Activated CD8-positive, alpha-beta memory T cell treated with anti-CD3 and anti-CD28 coated beads, Interleukin-2, amount 10 ng/mL, durations not matched to agents 7 days and 5 days (primary cell): ENCODE measurements at regions of chr11 and their contacts with region 1.

Region 1: DNA sequence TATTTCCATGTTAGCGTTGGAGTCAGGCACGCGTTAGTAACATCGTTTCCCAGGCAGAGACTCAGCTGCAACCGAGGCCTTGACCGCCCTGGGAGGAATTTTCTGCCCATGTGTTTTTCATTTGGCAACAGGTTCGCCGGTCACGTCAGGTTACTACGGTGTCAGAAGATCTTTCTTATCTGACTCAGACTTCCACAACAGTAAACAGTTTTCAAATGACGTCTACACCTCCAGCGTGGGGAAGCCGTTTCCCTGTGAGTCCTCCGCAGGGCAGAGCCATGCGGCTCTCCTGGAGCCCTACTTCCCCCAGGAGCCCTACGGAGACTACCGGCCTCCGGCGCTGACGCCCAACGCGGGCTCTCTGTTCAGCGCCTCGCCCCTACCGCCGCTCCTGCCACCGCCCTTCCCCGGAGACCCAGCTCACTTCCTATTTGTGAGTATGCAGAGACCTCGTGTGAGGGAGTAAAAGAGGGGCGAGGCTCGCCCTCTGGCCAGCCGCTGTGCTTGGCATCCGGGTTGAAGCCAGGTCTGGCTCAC is 14.3 kb upstream of the POU2AF3 start:
- DNase-seq: no peak
- ATAC-seq: no peak
- H3K4me3 Mint-ChIP-seq: no peak overlapping the region
- H3K27ac Mint-ChIP-seq: no peak overlapping the region
- H3K4me1 Mint-ChIP-seq: no peaks in the 10 kb centered on the region
- H3K27me3 Mint-ChIP-seq: peaks cover 13% of the 10 kb centered on the region

Region 2: DNA sequence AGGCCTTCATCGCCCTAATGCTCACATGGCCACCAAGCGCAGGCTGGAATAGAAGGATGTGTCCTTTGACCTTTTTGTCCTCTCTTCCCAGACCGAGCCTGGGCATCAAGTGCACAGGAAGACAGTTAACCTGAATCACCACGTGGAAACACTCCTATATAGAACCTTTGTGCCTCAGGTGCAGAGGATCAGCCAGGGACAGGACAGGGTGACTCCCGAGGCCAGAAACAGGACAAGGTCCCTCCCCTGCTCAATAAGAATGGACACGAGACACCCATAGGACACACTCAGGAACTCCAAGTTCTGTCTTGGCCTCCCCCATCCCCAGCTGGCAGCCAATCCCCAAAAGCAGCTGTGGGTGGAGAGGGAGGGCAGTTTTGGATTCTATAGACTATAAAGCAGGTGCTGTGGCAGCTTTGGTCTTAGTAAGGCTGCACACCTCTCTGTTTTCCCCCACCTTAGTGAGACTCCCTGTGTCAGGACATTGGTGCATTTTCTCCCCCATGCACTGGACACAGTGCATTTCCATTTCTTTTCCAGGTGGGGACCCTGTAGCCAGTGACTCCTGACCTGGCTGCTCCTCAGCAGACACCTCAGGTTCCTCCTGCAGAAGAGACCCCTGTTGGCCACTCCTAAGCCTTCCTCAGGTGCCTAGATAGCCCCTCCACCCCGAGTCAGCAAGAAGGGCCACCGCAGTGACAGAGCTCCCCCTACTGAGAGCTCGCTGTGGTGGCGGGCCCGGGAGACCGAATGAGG is 138.7 kb after region 1 on chr11:
- CTCF ChIA-PET with region 1: interaction called, 64 read pairs
- DNase-seq: peak; percentile 51
- ATAC-seq: peak; percentile 57
- H3K4me3 Mint-ChIP-seq: no peak overlapping the region
- H3K27ac Mint-ChIP-seq: no peak overlapping the region
- H3K4me1 Mint-ChIP-seq: peaks cover 15% of the 10 kb centered on the region
- H3K27me3 Mint-ChIP-seq: peaks cover 4% of the 10 kb centered on the region

Region 3: GRCh38 chr11:111429066-111429506 is 145.1 kb after region 1 on chr11:
- CTCF ChIA-PET with region 1: interaction called, 64 read pairs
- DNase-seq: peak; percentile 72
- ATAC-seq: peak; percentile 55
- H3K4me3 Mint-ChIP-seq: no peak overlapping the region
- H3K27ac Mint-ChIP-seq: no peak overlapping the region
- H3K4me1 Mint-ChIP-seq: peaks cover 2% of the 10 kb centered on the region
- H3K27me3 Mint-ChIP-seq: peaks cover 21% of the 10 kb centered on the region